ENCODE measurements at regions of chr5 and their contacts with region 1.

Region 1: DNA sequence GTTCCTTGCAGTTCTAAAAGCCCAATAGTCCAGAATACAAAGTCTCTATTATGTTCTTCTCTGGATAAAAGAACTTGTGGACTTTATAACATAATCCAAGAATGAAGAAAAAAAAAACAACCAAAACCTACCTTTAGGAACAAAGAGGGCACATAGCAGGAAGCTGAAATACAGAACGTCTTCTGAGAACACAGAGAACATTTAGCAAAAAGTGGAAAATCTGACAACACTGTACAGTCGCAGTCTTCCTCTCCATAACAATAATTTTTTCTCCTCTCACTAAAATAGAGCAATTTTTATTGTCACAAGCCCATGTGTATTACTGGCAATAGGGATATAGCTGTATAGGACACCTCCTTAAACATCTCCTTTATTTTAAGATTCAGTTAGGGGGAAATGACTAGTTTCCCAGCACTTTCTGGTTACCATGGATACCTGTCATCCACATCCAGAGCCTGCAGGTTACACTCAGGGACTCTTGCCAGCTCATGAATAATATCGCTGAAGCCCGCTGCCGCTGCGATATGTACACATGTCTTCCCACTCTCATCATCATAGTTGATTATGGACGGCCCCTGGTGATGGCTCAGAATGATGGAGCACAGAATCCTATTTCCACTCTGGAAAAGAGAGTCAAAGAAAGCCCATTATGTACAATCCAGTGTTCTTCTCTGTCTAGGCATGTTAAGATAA is 106.5 kb downstream of the ANKRD55 start:
- DNase-seq: no peak
- H3K4me3 Mint-ChIP-seq: peak overlapping the region; percentile 76
- H3K27ac Mint-ChIP-seq: peak overlapping the region; percentile 94
- H3K4me1 Mint-ChIP-seq: peaks cover 40% of the 10 kb centered on the region
- H3K27me3 Mint-ChIP-seq: no peaks in the 10 kb centered on the region

Region 2: DNA sequence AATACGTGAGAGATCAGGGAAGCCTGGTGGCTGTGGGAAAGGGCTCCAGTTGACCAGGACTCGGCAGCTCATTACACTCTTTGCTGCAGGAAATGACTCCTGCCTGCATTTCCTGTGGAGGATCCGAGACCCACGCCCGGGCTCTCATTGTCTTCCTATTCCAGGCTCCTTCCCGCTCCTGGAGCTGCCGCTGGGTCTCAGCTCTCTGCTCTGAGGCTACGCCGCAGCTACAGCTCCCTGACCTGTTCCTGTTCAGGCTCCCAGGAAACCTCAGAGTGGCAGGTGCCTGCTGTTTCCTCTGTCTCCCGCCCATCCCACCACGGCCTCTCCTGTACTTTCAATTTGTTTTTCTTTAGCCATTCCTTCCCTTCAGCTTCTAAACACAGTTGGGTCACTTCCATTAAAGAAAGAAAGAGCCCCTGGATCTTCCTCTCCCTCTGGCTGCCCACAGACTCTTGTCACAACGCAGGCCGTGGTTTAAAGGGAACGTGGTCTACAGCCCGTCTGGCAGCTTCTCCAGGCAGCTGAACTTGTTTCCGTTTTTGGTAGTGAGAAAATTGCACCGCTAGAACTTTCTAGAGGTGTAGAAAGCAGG is 203.4 kb before region 1 on chr5:
- intact Hi-C with region 1: no loop called
- DNase-seq: no peak
- H3K4me3 Mint-ChIP-seq: peak overlapping the region; percentile 82
- H3K27ac Mint-ChIP-seq: peak overlapping the region; percentile 79
- H3K4me1 Mint-ChIP-seq: peaks cover 41% of the 10 kb centered on the region
- H3K27me3 Mint-ChIP-seq: peaks cover 1% of the 10 kb centered on the region

Region 3: DNA sequence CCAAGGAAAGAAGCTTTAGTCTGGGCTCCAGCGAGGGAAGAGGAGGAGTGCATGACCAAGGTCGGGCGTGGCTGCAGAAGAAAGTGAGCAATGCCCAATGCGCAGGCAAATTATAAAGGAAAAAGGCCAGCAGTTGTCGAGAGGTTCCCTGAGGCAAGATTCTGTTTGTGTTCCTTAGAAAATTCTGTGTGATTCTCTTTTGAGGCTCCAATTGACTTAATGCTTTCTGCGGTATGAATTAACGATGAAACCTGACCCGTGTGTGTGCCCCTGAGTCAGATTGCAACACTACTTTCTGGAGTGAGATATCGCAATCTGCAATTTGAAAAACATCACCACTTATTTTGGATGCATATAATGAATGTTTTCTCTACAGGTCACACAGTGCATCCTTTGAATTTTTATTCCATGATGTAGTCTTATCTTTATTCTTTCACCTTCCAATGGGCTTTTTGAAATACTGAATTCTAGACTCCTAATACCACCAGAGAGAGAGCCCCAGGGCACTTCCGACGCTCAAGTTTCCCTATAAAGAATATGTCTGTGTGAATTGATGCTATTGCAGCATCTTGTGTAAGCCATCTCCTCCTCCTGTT is 14.0 kb before region 1 on chr5:
- intact Hi-C with region 1: loop called (anchors 2 kb)
- DNase-seq: no peak
- H3K4me3 Mint-ChIP-seq: no peak overlapping the region
- H3K27ac Mint-ChIP-seq: no peak overlapping the region
- H3K4me1 Mint-ChIP-seq: peaks cover 16% of the 10 kb centered on the region
- H3K27me3 Mint-ChIP-seq: no peaks in the 10 kb centered on the region